Activated CD8-positive, alpha-beta memory T cell treated with anti-CD3 and anti-CD28 coated beads, Interleukin-2, amount 10 ng/mL, durations not matched to agents 7 days and 5 days (primary cell): ENCODE measurements at regions of chr17 and their contacts with region 1.

Region 1: DNA sequence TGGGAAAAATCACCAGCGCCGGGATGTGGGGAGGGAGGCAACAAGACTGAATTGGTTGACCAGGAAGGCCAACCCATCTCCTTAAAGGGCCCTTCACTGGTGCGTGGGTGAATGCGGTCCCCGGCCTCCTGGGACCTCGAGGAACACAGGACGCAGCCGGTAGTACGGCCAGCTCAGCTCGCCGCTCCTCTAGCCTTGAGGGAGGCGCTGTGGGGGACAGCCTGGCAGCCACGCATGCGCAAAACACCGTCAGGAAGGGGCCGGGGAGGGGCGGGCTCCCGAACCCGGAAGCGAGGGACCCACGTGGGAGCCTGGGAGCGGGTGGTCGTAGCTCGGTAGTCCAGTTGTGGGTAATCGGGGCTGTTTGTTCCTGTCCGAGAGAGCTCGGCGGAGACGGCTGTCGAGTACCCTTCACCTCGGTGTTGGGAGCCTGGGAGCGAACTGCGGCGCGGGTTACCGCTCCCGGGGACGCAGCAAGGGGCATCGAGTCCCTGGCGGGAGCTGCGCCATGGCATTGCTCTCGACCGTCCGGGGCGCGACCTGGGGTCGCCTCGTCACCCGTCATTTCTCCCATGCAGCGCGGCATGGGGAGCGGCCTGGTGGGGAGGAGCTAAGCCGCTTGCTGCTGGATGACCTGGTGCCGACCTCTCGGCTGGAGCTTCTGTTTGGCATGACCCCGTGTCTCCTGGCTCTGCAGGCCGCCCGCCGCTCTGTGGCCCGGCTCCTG is at the start of gene MRM1:
- DNase-seq: peak; percentile 96
- ATAC-seq: peak; percentile 92
- H3K4me3 Mint-ChIP-seq: peak within 1 kb of the TSS; percentile 85
- H3K27ac Mint-ChIP-seq: peak within 1 kb of the TSS; percentile 87
- H3K4me1 Mint-ChIP-seq: peaks cover 41% of the 10 kb centered on the region
- H3K27me3 Mint-ChIP-seq: no peaks in the 10 kb centered on the region
- total RNA-seq, gene MRM1: 13.6 to 17.0 TPM

Region 2: DNA sequence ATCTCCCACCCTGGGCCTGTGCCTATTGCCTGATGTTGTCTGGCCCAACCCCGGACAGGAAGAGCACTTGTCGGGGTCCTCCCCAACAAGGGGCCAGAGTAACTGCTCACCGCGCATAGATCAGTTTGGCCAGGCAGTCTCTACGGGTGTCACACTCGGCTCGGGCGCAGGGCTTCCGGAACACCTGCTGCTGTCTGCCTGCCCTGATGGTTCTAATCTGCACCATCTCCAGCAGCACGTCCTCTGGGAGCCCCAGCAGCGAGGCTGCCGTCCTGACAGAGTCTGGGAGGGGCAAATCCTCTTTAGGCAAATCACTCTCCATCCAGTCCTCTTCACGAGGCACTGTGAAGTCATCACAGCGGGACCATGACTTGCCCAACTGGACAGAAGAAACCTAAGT is 90.8 kb before region 1 on chr17:
- CTCF ChIA-PET with region 1: no interaction called
- DNase-seq: no peak
- ATAC-seq: no peak
- H3K4me3 Mint-ChIP-seq: no peak overlapping the region
- H3K27ac Mint-ChIP-seq: no peak overlapping the region
- H3K4me1 Mint-ChIP-seq: no peaks in the 10 kb centered on the region
- H3K27me3 Mint-ChIP-seq: no peaks in the 10 kb centered on the region

Region 3: GRCh38 chr17:36534840-36535668 is 66.4 kb before region 1 on chr17 and contains the starts of genes MYO19 and PIGW:
- CTCF ChIA-PET with region 1: interaction called, 42 read pairs
- DNase-seq: peak; percentile 91
- ATAC-seq: peak; percentile 86
- H3K4me3 Mint-ChIP-seq: peak within 1 kb of the TSS; percentile 93
- H3K27ac Mint-ChIP-seq: peak within 1 kb of the TSS; percentile 99
- H3K4me1 Mint-ChIP-seq: peaks cover 44% of the 10 kb centered on the region
- H3K27me3 Mint-ChIP-seq: no peaks in the 10 kb centered on the region
- total RNA-seq, gene MYO19: 140 to 161 TPM
- total RNA-seq, gene PIGW: 9.6 to 17.4 TPM

Region 4: GRCh38 chr17:36611345-36612072 is 10.0 kb after region 1 on chr17:
- CTCF ChIA-PET with region 1: interaction called, 13 read pairs
- DNase-seq: no peak
- ATAC-seq: no peak
- H3K4me3 Mint-ChIP-seq: no peak overlapping the region
- H3K27ac Mint-ChIP-seq: no peak overlapping the region
- H3K4me1 Mint-ChIP-seq: peaks cover 3% of the 10 kb centered on the region
- H3K27me3 Mint-ChIP-seq: no peaks in the 10 kb centered on the region

Region 5: GRCh38 chr17:36629252-36629847 is 27.9 kb after region 1 on chr17:
- CTCF ChIA-PET with region 1: interaction called, 65 read pairs
- DNase-seq: peak; percentile 86
- ATAC-seq: peak; percentile 88
- H3K4me3 Mint-ChIP-seq: no peak overlapping the region
- H3K27ac Mint-ChIP-seq: no peak overlapping the region
- H3K4me1 Mint-ChIP-seq: no peaks in the 10 kb centered on the region
- H3K27me3 Mint-ChIP-seq: peaks cover 9% of the 10 kb centered on the region

Region 6: GRCh38 chr17:37047631-37048104 is 446.2 kb after region 1 on chr17:
- CTCF ChIA-PET with region 1: interaction called, 22 read pairs
- DNase-seq: peak; percentile 90
- ATAC-seq: peak; percentile 83
- H3K4me3 Mint-ChIP-seq: no peak overlapping the region
- H3K27ac Mint-ChIP-seq: peak overlapping the region; percentile 66
- H3K4me1 Mint-ChIP-seq: peaks cover 12% of the 10 kb centered on the region
- H3K27me3 Mint-ChIP-seq: no peaks in the 10 kb centered on the region

Region 7: DNA sequence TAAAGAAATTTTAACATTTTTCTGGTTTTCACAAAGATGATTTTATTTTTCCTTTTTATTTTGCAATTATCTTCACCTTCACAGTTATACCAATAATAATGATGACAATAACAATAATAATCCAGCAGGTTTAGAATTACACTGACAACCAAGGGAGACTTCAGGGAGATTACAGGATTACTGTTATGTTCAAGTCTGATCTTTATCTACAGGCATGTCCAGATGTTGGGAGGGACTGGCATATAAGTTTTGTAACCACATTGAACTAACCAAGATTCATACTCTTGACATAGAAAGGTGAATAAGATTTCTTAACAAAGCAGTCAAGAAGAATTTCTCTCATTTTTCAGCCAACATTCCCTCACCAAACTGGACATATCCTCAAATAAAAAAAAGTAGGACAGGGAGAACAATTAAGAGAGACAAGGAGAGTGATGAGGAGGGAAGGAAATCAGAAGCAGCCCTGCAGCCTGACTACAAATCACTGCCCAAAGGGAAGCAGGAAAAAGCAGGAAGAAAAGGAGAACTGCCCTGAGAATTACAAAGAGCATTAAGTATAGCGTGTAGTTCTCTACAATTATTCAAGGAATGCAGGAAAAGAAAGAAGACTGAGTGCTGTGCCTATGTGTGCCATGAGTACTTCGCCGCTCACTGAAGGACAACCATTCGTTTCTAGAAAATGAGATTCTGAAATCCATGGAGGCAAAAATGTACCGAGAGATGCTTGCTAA is 618.6 kb after region 1 on chr17:
- CTCF ChIA-PET with region 1: interaction called, 10 read pairs
- DNase-seq: no peak
- ATAC-seq: no peak
- H3K4me3 Mint-ChIP-seq: no peak overlapping the region
- H3K27ac Mint-ChIP-seq: no peak overlapping the region
- H3K4me1 Mint-ChIP-seq: peaks cover 8% of the 10 kb centered on the region
- H3K27me3 Mint-ChIP-seq: no peaks in the 10 kb centered on the region

Region 8: DNA sequence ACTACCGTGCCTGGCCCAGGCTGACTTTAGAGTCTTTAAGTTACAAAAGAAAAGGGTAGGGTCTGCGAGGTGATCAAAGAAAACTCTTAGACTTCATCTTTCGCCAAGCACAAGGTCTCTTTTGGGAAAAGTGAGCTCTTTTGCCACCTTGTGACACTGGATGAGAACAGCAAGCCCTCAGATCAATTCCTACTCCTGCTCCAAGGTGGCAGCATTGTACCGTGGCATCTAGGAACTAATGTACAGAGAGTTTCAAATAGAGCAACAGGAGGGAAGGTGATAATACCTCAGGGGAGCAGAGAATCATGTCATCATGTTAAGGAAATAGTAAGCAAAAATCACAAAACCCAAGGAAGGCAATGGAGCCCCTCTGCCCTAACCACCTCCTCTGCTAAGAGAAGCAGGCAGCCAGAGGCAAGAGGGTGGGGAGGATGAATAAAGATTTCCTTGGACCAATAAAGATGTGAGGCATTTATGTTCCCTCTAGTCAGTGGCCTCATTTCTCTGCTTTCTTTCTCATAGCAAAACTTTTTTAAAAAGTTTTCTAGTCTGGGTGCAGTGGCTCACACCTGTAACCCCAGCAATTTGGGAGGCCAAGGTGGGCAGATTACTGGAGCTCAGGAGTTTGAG is 772.2 kb after region 1 on chr17:
- CTCF ChIA-PET with region 1: interaction called, 15 read pairs
- DNase-seq: peak; percentile 85
- ATAC-seq: peak; percentile 98
- H3K4me3 Mint-ChIP-seq: no peak overlapping the region
- H3K27ac Mint-ChIP-seq: no peak overlapping the region
- H3K4me1 Mint-ChIP-seq: peaks cover 10% of the 10 kb centered on the region
- H3K27me3 Mint-ChIP-seq: peaks cover 2% of the 10 kb centered on the region